ENCODE measurements at regions of chr2 and their contacts with region 1.

Region 1: GRCh38 chr2:167212014-167212648 is 323.9 kb downstream of the XIRP2 start:
- DNase-seq: no peak
- ATAC-seq: peak; percentile 72
- H3K4me3 ChIP-seq: no peak overlapping the region
- H3K27ac ChIP-seq: no peak overlapping the region
- H3K4me1 ChIP-seq: no peaks in the 10 kb centered on the region
- H3K27me3 ChIP-seq: no peaks in the 10 kb centered on the region
- CTCF ChIP-seq: peak; percentile 58 to 67 (median 60); a peak in 5 of 6 replicates
- EP300 ChIP-seq: no peak
- POLR2A ChIP-seq: no peak
- RAD21 ChIP-seq: peak; percentile 57

Region 2: DNA sequence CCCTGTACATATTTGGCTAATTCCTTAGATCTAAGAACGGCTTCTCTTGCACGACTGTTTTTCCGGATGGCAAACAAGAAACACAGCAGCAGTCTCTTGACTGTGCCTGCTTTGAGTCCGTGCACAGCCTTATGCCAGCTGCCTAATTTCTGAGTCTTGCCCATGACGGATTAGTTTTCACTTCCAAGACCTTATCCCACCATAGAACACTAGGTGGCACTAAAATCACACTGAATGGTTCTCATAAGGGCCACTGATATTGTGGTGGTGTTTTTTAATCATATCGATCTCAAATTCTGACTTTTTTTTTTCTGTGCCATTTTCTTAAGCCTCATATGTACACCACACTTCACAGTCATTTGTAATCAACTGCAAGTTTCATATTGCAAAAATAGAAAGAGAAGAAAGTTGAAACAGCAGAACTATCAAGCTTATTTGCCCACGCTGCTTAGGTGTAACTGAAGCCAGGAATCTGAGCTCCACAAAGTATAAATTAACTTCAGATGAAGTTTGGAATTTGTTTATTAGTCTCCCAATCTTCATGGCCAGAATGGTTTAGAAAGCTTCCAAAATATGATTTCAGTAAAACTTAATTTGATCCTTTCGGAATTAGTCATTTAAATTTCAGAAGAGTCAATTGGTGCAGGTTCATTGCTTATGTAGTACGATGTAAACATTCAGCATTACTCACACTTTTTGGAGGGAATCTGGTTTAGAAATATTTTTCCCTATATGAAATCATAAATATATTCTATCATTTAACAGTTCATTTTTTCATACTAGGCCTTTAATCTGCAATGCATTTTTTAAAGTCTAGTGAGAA is 672.6 kb before region 1 on chr2:
- CTCF ChIA-PET with region 1: interaction called, 16 read pairs
- POLR2A ChIA-PET with region 1: no interaction called
- RAD21 ChIA-PET with region 1: interaction called, 3 read pairs
- SMC1A ChIA-PET with region 1: interaction called, 6 read pairs
- in situ Hi-C with region 1: no loop called
- intact Hi-C with region 1: loop called (anchors 1 kb)
- DNase-seq: peak; percentile 12
- ATAC-seq: peak; percentile 94
- H3K4me3 ChIP-seq: no peak overlapping the region
- H3K27ac ChIP-seq: no peak overlapping the region
- H3K4me1 ChIP-seq: no peaks in the 10 kb centered on the region
- H3K27me3 ChIP-seq: no peaks in the 10 kb centered on the region
- CTCF ChIP-seq: peak; percentile 71 to 83 (median 74)
- EP300 ChIP-seq: no peak
- POLR2A ChIP-seq: no peak
- RAD21 ChIP-seq: peak; percentile 90

Region 3: DNA sequence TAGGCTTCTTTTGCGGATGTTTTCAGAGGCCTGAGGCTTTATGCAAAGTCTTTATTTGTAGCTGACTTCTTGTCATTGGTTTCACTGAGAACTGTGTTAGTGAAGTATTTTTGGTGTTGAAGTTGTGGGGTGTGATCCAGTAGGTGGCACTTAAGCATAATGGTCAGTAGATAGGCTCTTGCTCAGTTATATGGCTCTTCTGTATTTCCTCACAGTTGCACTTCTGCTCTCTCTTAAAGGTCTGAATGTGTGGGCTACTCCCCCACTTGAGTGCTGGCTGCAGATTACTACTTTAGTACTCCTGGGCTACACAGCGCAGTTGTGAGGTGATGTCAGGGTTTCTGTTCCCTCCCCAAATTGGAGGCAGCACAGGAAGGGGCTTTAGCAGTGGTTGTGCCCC is 584.2 kb before region 1 on chr2:
- CTCF ChIA-PET with region 1: interaction called, 3 read pairs
- POLR2A ChIA-PET with region 1: no interaction called
- RAD21 ChIA-PET with region 1: no interaction called
- SMC1A ChIA-PET with region 1: no interaction called
- in situ Hi-C with region 1: no loop called
- intact Hi-C with region 1: loop called (anchors 5 kb)
- DNase-seq: no peak
- ATAC-seq: peak; percentile 68
- H3K4me3 ChIP-seq: no peak overlapping the region
- H3K27ac ChIP-seq: no peak overlapping the region
- H3K4me1 ChIP-seq: no peaks in the 10 kb centered on the region
- H3K27me3 ChIP-seq: no peaks in the 10 kb centered on the region
- CTCF ChIP-seq: 0 out of 6 replicates have a peak, but pooled peaks of 1 of the 3 experiments have one; percentile 4
- EP300 ChIP-seq: no peak
- POLR2A ChIP-seq: no peak
- RAD21 ChIP-seq: no peak

Region 4: GRCh38 chr2:166700079-166700478 is 512.1 kb before region 1 on chr2:
- CTCF ChIA-PET with region 1: interaction called, 19 read pairs
- POLR2A ChIA-PET with region 1: no interaction called
- RAD21 ChIA-PET with region 1: interaction called, 13 read pairs
- SMC1A ChIA-PET with region 1: interaction called, 15 read pairs
- in situ Hi-C with region 1: no loop called
- intact Hi-C with region 1: loop called (anchors 5 kb)
- DNase-seq: no peak
- ATAC-seq: peak; percentile 42; the same call in 1 of the 3 replicates
- H3K4me3 ChIP-seq: no peak overlapping the region
- H3K27ac ChIP-seq: no peak overlapping the region
- H3K4me1 ChIP-seq: no peaks in the 10 kb centered on the region
- H3K27me3 ChIP-seq: no peaks in the 10 kb centered on the region
- CTCF ChIP-seq: peak in 1 of 3 experiments; percentile 56; a peak in 2 of 6 replicates
- EP300 ChIP-seq: no peak
- POLR2A ChIP-seq: no peak
- RAD21 ChIP-seq: peak; percentile 53

Region 5: GRCh38 chr2:167192833-167193232 is 19.3 kb before region 1 on chr2:
- CTCF ChIA-PET with region 1: no interaction called
- POLR2A ChIA-PET with region 1: no interaction called
- RAD21 ChIA-PET with region 1: no interaction called
- SMC1A ChIA-PET with region 1: no interaction called
- in situ Hi-C with region 1: no loop called
- intact Hi-C with region 1: no loop called
- DNase-seq: no peak
- ATAC-seq: no peak
- H3K4me3 ChIP-seq: no peak overlapping the region
- H3K27ac ChIP-seq: no peak overlapping the region
- H3K4me1 ChIP-seq: no peaks in the 10 kb centered on the region
- H3K27me3 ChIP-seq: no peaks in the 10 kb centered on the region
- CTCF ChIP-seq: no peak
- EP300 ChIP-seq: no peak
- POLR2A ChIP-seq: no peak
- RAD21 ChIP-seq: no peak

Measured in GM12878 (cell line).